Activated CD4-positive, alpha-beta memory T cell treated with anti-CD3 and anti-CD28 coated beads, Interleukin-2, amount 10 ng/mL, durations not matched to agents 7 days and 5 days (primary cell): ENCODE measurements at regions of chr6 and their contacts with region 1.

Region 1: GRCh38 chr6:31541658-31542521 is at the start of gene DDX39B:
- DNase-seq: peak; percentile 94
- H3K4me3 Mint-ChIP-seq: peak within 1 kb of the TSS; percentile 89
- H3K27ac Mint-ChIP-seq: peak within 1 kb of the TSS; percentile 75
- H3K4me1 Mint-ChIP-seq: peaks cover 52% of the 10 kb centered on the region
- H3K27me3 Mint-ChIP-seq: no peaks in the 10 kb centered on the region
- total RNA-seq, gene DDX39B: 427 to 434 TPM

Region 2: DNA sequence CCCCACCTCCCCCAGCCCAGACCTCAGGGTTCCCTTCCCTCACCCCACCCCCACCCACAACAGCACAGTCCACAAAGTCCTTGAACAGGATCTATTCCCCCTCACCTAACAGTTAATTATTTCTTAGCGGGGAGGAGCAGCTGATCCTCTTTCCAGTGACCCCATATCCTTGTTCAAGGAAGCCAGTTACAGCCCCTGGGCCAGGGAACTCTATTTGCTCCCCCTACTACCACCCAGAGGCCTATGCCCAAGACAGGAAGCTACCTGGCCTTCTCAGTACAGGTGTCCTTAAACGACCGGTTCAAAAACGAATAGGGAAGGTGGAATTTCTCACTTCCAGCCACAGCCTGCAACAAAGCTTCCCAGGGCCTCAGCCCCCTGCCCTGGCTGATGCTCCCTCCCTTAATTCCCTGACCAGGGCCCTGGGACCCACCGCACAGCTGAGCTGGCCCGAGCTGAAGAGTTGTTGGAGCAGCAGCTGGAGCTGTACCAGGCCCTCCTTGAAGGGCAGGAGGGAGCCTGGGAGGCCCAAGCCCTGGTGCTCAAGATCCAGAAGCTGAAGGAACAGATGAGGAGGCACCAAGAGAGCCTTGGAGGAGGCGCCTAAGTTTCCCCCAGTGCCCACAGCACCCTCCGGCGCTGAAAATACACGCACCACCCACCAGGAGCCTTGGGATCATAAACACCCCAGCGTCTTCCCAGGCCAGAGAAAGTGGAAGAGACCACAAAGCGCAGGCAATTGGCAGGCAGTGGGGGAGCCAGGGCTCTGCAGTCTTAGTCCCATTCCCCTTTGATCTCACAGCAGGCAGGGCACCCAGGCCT is 12.3 kb before region 1 on chr6:
- CTCF ChIA-PET with region 1: no interaction called
- POLR2A ChIA-PET with region 1: interaction called, 18 read pairs
- DNase-seq: no peak
- H3K4me3 Mint-ChIP-seq: no peak overlapping the region
- H3K27ac Mint-ChIP-seq: no peak overlapping the region
- H3K4me1 Mint-ChIP-seq: peaks cover 21% of the 10 kb centered on the region
- H3K27me3 Mint-ChIP-seq: no peaks in the 10 kb centered on the region

Region 3: DNA sequence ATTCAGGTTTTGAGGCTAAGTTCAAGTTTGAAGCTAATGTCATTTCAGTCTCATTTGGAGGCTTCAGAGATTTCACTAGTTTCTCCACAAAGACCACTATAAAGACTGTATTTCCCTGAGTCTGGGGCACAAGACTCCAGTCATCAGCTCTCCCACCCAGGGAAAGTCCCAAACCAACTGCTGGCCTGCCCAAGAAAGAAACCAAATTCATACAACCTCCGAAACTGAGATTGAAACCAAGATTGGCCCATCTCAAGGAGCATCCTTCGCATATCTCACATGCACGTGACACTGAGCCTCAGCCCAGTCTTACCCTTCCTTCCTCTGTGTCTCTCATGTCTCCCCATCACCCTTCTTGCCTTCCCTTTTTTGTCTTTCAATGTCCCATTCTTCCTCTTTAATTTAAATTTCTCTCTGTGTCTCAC is 26.7 kb after region 1 on chr6:
- CTCF ChIA-PET with region 1: interaction called, 400 read pairs
- POLR2A ChIA-PET with region 1: interaction called, 267 read pairs
- DNase-seq: peak; percentile 79
- H3K4me3 Mint-ChIP-seq: peak overlapping the region; percentile 23
- H3K27ac Mint-ChIP-seq: peak overlapping the region; percentile 66
- H3K4me1 Mint-ChIP-seq: peaks cover 69% of the 10 kb centered on the region
- H3K27me3 Mint-ChIP-seq: peaks cover 41% of the 10 kb centered on the region

Region 4: GRCh38 chr6:31597006-31597405 is 55.1 kb after region 1 on chr6:
- CTCF ChIA-PET with region 1: interaction called, 751 read pairs
- POLR2A ChIA-PET with region 1: interaction called, 145 read pairs
- DNase-seq: peak; percentile 49
- H3K4me3 Mint-ChIP-seq: no peak overlapping the region
- H3K27ac Mint-ChIP-seq: no peak overlapping the region
- H3K4me1 Mint-ChIP-seq: peaks cover 53% of the 10 kb centered on the region
- H3K27me3 Mint-ChIP-seq: no peaks in the 10 kb centered on the region

Region 5: GRCh38 chr6:31652925-31653718 is 111.2 kb after region 1 on chr6:
- CTCF ChIA-PET with region 1: interaction called, 3 read pairs
- POLR2A ChIA-PET with region 1: interaction called, 37 read pairs
- DNase-seq: no peak
- H3K4me3 Mint-ChIP-seq: peak overlapping the region; percentile 97
- H3K27ac Mint-ChIP-seq: peak overlapping the region; percentile 98
- H3K4me1 Mint-ChIP-seq: peaks cover 66% of the 10 kb centered on the region
- H3K27me3 Mint-ChIP-seq: no peaks in the 10 kb centered on the region